Mammary epithelial cell (primary cell): ENCODE measurements at regions of chr13 and their contacts with region 1.

Region 1: GRCh38 chr13:44815623-44816022 is 173.6 kb downstream of the NUFIP1 start:
- DNase-seq: peak; percentile 92
- H3K4me3 ChIP-seq: no peak overlapping the region
- H3K27ac ChIP-seq: peak overlapping the region; percentile 27
- H3K4me1 ChIP-seq: peaks cover 38% of the 10 kb centered on the region
- H3K27me3 ChIP-seq: no peaks in the 10 kb centered on the region
- CTCF ChIP-seq: no peak

Region 2: GRCh38 chr13:44484562-44485138 is 331.0 kb before region 1 on chr13:
- CTCF ChIA-PET with region 1: interaction called, 11 read pairs
- dilution Hi-C with region 1: no loop called
- in situ Hi-C with region 1: no loop called
- intact Hi-C with region 1: loop called (anchors 1 kb)
- DNase-seq: no peak
- H3K4me3 ChIP-seq: no peak overlapping the region
- H3K27ac ChIP-seq: no peak overlapping the region
- H3K4me1 ChIP-seq: no peaks in the 10 kb centered on the region
- H3K27me3 ChIP-seq: no peaks in the 10 kb centered on the region
- CTCF ChIP-seq: no peak

Region 3: DNA sequence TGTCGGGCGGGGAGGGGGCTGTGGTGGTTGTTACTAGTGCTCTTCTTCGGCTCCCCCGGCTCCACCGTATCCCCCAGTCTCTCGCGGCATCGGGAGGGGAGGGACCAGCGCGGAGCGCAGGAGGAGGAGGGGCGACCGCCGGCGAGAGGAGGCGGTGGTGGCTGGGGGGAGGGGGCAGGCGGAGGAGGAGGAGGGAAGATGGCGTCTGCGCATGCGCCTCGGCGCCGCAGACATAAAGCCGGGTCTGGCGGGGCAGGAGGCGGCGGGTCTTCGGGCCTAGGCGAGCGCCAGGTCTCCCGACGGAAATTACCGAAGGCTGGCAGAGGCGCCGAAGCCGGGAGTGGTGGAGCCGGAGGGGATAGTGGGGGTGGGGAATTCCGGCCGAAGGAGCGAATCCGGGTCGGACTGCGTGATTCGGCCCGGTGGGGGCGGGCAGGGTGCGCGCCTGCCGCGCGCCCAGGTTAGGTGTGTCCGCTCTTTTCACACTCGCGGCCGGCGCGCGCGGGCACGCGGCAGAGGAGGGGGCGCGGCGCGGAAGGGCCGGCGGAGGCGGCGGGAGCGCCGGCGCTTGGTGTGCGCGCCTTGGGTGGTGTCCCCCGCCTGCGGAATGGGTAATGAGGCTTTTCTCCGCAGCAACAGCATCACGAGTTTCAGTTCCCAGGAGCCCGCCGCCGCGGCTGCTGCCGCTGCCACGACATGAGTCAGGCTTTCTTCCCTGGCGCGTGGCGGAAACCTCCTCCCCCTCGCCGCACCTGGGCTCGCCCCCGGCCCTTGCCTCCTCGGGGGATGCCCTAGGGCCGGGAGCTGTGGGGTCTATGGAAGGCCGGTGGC is 238.2 kb before region 1 on chr13:
- CTCF ChIA-PET with region 1: no interaction called
- dilution Hi-C with region 1: no loop called
- in situ Hi-C with region 1: no loop called
- intact Hi-C with region 1: loop called (anchors 1 kb)
- DNase-seq: peak; percentile 93
- H3K4me3 ChIP-seq: peak overlapping the region; percentile 82 to 88 (median 85)
- H3K27ac ChIP-seq: peak overlapping the region; percentile 83
- H3K4me1 ChIP-seq: peaks cover 36% of the 10 kb centered on the region
- H3K27me3 ChIP-seq: no peaks in the 10 kb centered on the region
- CTCF ChIP-seq: no peak

Region 4: GRCh38 chr13:44710576-44710975 is 105.0 kb before region 1 on chr13:
- CTCF ChIA-PET with region 1: no interaction called
- dilution Hi-C with region 1: no loop called
- in situ Hi-C with region 1: no loop called
- intact Hi-C with region 1: loop called (anchors 2 kb)
- DNase-seq: peak; percentile 91
- H3K4me3 ChIP-seq: no peak overlapping the region
- H3K27ac ChIP-seq: peak overlapping the region; percentile 94
- H3K4me1 ChIP-seq: peaks cover 54% of the 10 kb centered on the region
- H3K27me3 ChIP-seq: no peaks in the 10 kb centered on the region
- CTCF ChIP-seq: no peak

Region 5: DNA sequence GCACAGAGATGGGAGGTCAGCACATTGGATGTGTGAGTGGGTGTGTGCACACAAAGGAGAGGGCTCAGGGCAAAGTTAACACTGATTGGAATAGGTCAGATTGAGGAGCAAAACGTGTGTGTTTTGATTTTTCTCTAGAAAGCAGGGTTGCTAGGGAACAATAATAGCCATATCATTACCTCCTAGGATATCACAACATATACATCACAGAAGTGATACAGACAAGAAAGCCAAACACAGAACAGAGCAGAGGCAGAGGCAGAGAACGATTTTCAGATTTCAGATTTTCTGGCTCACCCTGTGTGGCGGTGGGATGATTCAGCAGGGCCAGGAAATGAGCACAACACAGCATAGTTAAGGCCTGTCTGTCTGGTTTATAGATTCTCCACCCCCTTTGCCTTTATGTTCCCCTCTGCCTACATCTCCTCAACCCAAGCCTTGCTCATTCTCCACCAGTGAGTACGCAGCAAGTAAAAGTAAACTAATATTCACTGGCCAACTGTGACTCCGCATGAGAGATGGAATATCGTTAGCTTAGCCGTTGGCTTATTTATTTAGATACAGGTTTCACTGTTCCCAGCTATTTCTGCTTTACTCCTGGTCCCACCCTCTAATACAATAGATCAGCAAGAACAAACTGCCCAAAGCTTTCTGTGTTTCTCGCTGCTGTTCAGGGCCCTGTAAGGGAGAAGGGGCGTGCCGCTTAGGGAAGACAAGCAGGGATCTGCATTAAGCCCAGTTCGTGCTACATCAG is 56.8 kb before region 1 on chr13:
- CTCF ChIA-PET with region 1: no interaction called
- dilution Hi-C with region 1: no loop called
- in situ Hi-C with region 1: no loop called
- intact Hi-C with region 1: loop called (anchors 5 kb)
- DNase-seq: peak; percentile 92
- H3K4me3 ChIP-seq: no peak overlapping the region
- H3K27ac ChIP-seq: peak overlapping the region; percentile 95
- H3K4me1 ChIP-seq: peaks cover 60% of the 10 kb centered on the region
- H3K27me3 ChIP-seq: no peaks in the 10 kb centered on the region
- CTCF ChIP-seq: no peak

Region 6: GRCh38 chr13:44951184-44951583 is 135.6 kb after region 1 on chr13:
- CTCF ChIA-PET with region 1: interaction called, 15 read pairs
- dilution Hi-C with region 1: no loop called
- in situ Hi-C with region 1: no loop called
- intact Hi-C with region 1: no loop called
- DNase-seq: no peak
- H3K4me3 ChIP-seq: no peak overlapping the region
- H3K27ac ChIP-seq: no peak overlapping the region
- H3K4me1 ChIP-seq: no peaks in the 10 kb centered on the region
- H3K27me3 ChIP-seq: no peaks in the 10 kb centered on the region
- CTCF ChIP-seq: no peak

Region 7: GRCh38 chr13:45194081-45194939 is 378.7 kb after region 1 on chr13:
- CTCF ChIA-PET with region 1: no interaction called
- dilution Hi-C with region 1: no loop called
- in situ Hi-C with region 1: no loop called
- intact Hi-C with region 1: no loop called
- DNase-seq: peak; percentile 69
- H3K4me3 ChIP-seq: peak overlapping the region; percentile 36 to 94 (median 72)
- H3K27ac ChIP-seq: peak overlapping the region; percentile 68
- H3K4me1 ChIP-seq: peaks cover 59% of the 10 kb centered on the region
- H3K27me3 ChIP-seq: no peaks in the 10 kb centered on the region
- CTCF ChIP-seq: peak; percentile 84 to 88